ENCODE measurements at regions of chr17 and their contacts with region 1.

Region 1: DNA sequence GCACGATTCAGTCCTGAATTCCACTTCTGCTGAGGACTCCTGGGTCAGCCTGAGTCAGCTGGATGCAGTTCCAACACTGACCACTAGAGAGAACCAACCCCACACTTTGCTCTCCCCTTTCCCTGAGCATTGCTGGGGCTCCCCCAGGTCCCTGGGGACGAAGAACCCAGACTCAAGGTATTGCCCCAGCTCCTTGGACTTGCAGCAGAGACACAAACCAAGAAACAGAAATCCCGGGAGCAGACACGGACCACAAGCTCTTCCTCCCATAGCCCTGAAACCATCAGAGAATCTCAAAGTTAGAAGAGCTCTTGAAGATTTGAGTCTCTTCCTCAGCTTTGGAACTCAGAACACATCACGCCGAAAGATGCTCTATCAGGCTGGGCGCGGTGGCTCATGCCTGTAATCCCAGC is 678 bp upstream of the GH1 start:
- DNase-seq: peak; percentile 79
- ATAC-seq: peak; percentile 93
- H3K4me3 Mint-ChIP-seq: no peak overlapping the region
- H3K27ac Mint-ChIP-seq: peak overlapping the region; percentile 47
- H3K4me1 Mint-ChIP-seq: peaks cover 8% of the 10 kb centered on the region
- H3K27me3 Mint-ChIP-seq: peaks cover 16% of the 10 kb centered on the region

Region 2: GRCh38 chr17:63931099-63931561 is 11.8 kb after region 1 on chr17:
- CTCF ChIA-PET with region 1: interaction called, 23 read pairs
- POLR2A ChIA-PET with region 1: no interaction called
- DNase-seq: peak; percentile 75
- ATAC-seq: peak; percentile 80
- H3K4me3 Mint-ChIP-seq: peak overlapping the region; percentile 93
- H3K27ac Mint-ChIP-seq: peak overlapping the region; percentile 82
- H3K4me1 Mint-ChIP-seq: peaks cover 29% of the 10 kb centered on the region
- H3K27me3 Mint-ChIP-seq: peaks cover 10% of the 10 kb centered on the region

Region 3: DNA sequence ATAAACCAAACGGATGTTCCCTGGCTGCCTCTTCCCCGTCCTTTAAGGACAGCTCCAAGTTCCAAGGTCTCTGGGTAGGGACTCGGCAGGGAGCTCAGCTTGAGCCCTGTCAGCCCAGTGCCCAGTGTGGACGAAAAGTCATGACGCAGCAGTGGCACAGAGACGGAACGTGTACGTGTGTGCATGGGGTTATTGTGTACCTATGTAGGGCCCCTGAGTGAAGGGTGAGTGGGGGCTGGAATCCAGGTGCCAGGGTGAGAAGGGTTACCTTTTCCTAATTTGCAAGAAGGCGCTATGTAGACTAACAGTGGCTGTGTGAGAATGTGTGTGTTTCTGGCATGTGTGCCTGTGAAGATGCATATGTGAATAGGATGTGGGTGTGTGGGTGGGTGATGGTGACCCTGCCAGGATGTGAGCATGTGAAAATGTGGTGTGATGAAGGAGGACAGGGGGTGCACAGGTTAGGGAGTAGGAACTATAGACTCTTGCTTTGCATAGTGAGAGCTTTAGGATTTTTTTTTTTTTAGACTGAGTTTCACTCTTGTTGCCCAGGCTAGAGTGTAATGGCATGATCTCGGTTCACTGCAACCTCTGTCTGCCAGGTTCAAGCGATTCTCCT is 47.4 kb after region 1 on chr17:
- CTCF ChIA-PET with region 1: interaction called, 17 read pairs
- POLR2A ChIA-PET with region 1: no interaction called
- DNase-seq: peak; percentile 76
- ATAC-seq: peak; percentile 70
- H3K4me3 Mint-ChIP-seq: no peak overlapping the region
- H3K27ac Mint-ChIP-seq: peak overlapping the region; percentile 16
- H3K4me1 Mint-ChIP-seq: peaks cover 22% of the 10 kb centered on the region
- H3K27me3 Mint-ChIP-seq: peaks cover 5% of the 10 kb centered on the region

Region 4: DNA sequence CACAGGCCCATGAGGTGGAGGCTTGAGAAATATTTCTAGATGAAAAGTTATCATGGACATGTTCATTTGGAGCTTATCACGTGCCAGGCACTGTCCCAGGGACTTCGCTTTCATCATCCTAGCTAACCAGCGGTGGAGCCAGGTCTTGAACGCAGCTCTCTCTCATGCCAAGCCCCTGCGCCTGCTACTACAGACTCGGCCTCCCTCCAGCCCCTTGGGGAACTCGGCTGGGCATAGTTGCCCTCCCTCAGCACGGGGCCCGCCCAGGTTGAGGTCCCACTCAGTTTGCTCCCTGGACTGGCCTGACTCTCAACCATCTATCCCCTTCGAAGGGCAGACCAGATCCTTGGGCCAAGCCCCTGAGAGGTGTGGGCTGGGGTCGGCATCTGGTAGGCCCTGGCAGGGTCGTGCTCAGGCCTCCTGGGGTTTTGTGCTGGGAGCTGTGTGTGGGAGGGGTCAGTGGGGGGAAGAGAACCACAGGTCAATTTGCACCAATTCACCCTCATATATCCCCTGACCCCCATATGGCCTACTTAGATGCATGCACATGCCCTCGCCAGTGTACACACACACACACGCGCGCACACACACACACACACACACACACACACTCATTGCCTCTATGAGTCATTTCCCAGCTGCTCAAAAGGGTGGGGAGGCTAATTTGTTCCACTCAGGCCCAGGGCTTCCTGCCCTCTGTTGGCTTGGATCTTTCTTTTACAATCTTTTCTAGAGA is 65.5 kb after region 1 on chr17:
- CTCF ChIA-PET with region 1: interaction called, 78 read pairs
- POLR2A ChIA-PET with region 1: no interaction called
- DNase-seq: peak; percentile 84
- ATAC-seq: peak; percentile 84
- H3K4me3 Mint-ChIP-seq: no peak overlapping the region
- H3K27ac Mint-ChIP-seq: peak overlapping the region; percentile 66
- H3K4me1 Mint-ChIP-seq: peaks cover 23% of the 10 kb centered on the region
- H3K27me3 Mint-ChIP-seq: peaks cover 2% of the 10 kb centered on the region

Region 5: DNA sequence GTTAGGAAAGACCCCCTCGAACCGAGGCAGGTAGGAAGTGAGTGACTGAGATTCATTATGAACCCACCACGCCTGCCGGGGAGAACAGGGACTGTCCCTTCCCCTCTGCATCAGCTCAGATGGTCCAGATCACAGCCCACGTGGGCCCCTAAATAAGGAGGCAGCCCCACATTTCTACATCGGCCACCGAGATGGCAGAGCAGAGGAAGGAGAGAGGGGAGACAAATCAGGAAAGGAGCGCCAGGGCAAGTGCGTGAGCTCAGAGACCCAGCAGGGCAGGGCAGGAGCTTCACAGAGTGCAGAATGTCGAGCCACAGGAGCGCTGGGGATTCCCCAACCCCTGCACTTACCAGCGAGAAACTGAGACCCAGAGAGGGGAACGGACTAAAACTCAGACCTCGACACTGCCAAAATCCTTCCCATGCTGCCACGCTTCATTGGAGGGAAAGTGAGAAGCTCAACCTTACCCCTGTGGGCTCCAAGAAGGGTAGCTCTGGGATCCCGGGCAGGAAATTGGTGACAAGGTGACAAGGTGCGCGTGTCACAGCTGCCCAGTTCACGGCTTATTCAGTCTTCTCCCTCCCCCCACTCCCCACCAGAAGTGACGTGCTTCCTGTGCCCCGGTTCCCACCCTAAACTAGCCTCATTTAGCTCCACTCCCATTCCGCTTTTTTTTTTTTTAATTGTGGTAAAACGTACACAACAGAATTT is 100.9 kb after region 1 on chr17 and contains the start of gene ICAM2:
- CTCF ChIA-PET with region 1: interaction called, 114 read pairs
- POLR2A ChIA-PET with region 1: no interaction called
- DNase-seq: peak; percentile 96
- ATAC-seq: peak; percentile 78
- H3K4me3 Mint-ChIP-seq: peak within 1 kb of the TSS; percentile 96
- H3K27ac Mint-ChIP-seq: peak within 1 kb of the TSS; percentile 100
- H3K4me1 Mint-ChIP-seq: peaks cover 75% of the 10 kb centered on the region
- H3K27me3 Mint-ChIP-seq: no peaks in the 10 kb centered on the region
- total RNA-seq, gene ICAM2: 48.4 to 51.3 TPM